AG04449 (cell line): ENCODE measurements at regions of chr19 and their contacts with region 1.

Region 1: DNA sequence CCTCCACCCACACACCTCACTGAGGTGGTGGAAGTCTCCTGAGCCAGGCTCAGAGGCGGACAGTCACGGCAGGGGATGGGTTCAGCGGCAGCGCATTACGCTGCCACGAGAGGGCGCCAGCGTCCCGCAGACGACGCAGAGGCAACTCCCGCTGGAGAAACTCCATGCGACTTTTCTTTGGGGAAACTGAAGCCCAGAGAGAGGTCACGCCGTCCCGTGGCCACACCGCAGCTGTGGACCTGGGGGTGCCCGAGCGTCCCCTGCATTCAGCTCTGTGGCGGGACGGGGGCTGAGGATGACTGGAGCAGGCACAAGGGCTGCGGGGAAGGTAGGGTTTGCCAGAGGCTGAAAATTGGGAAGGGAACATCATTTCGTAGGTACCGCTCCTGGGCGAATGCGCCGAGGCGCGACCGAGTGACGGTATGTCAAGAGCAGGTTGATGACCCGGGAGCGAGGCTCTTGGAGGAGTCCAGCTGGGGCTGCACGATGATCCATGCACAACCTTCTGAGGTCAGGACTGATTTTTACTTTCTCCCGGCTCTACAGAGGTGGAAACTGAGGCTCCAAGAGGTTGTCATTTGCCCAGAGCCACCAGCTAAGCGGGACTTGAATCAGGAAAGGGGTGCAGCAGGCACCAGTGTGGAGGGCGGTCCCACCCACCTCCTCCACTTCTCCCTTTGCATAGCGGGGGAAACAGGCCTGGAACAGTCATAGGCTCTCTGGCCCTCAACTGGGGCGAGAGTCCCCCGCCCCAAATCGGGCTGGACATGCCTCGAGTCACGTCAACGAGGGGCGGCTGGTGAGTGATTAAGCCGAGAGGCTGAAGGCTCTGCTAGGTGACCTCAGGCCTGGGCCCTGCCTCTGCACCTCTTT is 690 bp upstream of the ARRDC2 start:
- DNase-seq: no peak
- H3K4me3 ChIP-seq: peak overlapping the region; percentile 60
- CTCF ChIP-seq: peak; percentile 97

Region 2: GRCh38 chr19:18021121-18021755 is 14.0 kb after region 1 on chr19:
- CTCF ChIA-PET with region 1: interaction called, 11 read pairs
- POLR2A ChIA-PET with region 1: no interaction called
- DNase-seq: no peak
- H3K4me3 ChIP-seq: no peak overlapping the region
- CTCF ChIP-seq: no peak

Region 3: DNA sequence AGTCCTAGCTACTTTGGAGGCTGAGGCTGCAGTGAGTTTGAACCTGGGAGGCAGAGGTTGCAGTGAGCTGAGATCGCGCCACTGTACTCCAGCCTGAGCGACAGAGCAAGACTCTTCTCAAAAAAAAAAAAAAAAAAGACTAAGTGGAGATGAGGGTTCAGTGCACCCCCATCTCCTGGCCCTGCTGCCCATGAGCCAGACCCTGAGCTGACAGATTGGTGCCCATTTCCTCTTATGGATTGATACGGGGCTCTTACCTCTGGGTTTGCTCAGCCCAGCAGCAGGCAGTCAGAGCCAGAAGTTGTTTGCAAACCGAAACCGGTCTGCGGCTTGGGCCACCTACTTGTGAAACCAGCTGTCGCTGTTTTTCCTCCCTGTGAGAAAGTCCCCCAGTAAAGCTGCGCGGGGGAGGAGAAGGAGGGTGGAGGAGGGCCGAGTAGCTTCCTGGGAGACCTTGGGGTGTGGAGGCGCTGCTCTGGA is 37.6 kb after region 1 on chr19:
- CTCF ChIA-PET with region 1: interaction called, 11 read pairs
- POLR2A ChIA-PET with region 1: no interaction called
- DNase-seq: no peak
- H3K4me3 ChIP-seq: peak overlapping the region; percentile 49
- CTCF ChIP-seq: no peak

Region 4: DNA sequence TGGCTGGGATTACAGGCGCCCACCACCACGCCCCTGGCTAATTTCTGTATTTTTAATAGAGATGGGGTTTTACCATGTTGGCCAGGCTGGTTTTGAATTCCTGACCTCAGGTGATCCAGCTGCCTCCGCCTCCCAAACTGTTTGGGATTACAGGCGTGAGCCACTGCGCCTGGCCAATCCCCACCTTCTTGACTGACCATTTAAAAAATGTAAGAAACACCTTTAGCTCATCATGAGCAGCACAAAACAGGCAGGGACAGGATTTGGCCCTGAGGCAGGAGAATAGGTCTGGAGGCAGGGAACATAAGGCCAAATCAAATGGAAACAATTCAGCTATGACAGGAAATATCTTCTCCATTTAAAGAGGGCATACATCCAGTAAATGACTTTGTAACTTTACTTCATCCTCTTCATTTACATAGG is 184.4 kb after region 1 on chr19:
- CTCF ChIA-PET with region 1: no interaction called
- POLR2A ChIA-PET with region 1: no interaction called
- DNase-seq: no peak
- H3K4me3 ChIP-seq: peak overlapping the region; percentile 65
- CTCF ChIP-seq: no peak